CD4-positive, alpha-beta T cell (primary cell): ENCODE measurements at regions of chr6 and their contacts with region 1.

Region 1: DNA sequence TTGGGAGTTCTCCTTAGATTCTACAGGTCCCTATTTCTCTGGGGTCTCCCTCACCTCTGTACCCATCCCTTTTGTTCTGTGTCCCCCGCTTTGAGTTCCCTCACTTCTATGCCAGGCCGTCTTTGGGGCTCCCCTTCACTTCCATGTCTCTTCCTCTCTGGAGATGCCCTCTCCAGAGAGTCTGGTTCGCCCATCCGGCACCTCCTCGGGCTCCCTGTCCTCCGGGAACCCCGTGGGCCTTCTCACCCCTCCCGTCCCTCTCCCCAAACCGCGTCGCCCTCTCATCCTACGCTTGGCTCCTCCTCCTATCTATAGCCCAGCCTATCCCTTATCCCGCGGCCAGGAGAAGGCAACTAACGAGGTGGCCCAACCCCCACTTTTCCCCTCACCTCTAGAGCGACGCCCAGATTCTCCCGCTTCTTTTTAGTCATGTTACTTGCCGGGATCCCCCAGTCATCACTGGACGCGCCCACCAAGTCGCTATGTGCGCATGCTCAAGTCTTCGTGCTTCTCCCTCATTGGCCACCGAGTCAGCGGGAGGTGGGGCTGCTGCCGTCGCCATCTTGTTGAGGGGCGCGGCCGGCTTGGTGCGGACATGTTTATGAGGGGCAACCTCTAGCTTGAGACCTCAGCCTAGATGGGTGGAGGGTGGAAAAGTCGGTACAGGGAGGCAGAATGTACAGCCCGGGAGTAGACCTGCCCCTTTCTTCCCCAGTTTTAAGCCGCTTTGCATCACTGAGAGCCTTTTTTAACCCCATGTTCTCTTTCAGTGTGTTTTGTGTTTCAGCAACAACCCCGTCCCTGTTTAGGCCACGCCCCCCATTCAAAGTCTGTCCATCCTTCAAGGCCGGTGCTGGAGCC is at the start of gene CCDC167:
- DNase-seq: peak; percentile 90 to 98 (median 94)
- ATAC-seq: peak; percentile 66
- H3K4me3 ChIP-seq: peak within 1 kb of the TSS; percentile 86
- H3K4me3 Mint-ChIP-seq: peak within 1 kb of the TSS; percentile 93
- H3K27ac ChIP-seq: peak within 1 kb of the TSS; percentile 77 to 81
- H3K27ac Mint-ChIP-seq: peak within 1 kb of the TSS; percentile 97
- H3K4me1 ChIP-seq: peaks cover 87% of the 10 kb centered on the region
- H3K4me1 Mint-ChIP-seq: peaks cover 79% of the 10 kb centered on the region
- H3K27me3 ChIP-seq: no peaks in the 10 kb centered on the region
- H3K27me3 Mint-ChIP-seq: no peaks in the 10 kb centered on the region
- CTCF ChIP-seq: no peak
- total RNA-seq, gene CCDC167: 7.3 to 8.0 TPM

Region 2: DNA sequence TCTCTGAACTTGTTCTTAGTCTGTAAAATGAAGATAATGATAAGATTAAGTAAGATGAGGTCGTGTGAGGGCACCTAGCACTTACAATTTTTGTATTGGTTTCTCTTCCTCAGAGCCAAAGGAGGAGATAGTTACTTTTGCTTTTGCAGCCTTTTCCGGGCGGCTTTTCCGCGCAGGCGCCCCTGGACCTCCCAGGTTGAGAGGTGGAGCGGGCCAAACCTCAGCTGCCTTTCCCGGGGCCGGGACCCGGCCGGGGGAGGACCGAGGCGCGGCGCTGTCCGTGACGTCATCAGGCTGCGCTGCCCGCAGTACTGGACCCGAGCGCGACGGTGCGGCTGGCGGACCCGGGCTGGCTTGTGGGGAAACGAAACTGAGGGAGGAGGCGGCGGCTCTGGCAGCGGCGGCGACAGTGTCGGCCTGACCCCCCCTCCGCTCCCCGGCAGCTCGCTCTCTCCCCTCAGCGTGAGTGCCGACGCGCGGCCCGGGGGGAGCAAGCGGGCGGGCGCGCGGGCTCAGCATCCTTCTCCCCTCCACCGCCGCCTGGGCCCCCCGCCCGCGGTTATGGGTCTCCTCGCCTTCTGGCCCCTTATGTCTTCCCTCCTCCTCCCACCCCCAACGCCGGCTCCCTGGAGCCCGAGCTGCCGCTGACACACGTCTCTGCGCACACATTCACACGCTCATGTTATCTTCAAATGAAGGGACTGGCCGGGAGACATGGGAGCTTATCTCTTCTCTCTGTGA is 66.6 kb before region 1 on chr6 and contains the start of gene CMTR1:
- CTCF ChIA-PET with region 1: no interaction called
- POLR2A ChIA-PET with region 1: interaction called, 15 read pairs
- intact Hi-C with region 1: loop called in 1 of 2 experiments (anchors 5 kb)
- DNase-seq: peak; percentile 91 to 99 (median 96)
- ATAC-seq: peak; percentile 89
- H3K4me3 ChIP-seq: peak within 1 kb of the TSS; percentile 98
- H3K4me3 Mint-ChIP-seq: peak within 1 kb of the TSS; percentile 95
- H3K27ac ChIP-seq: peak within 1 kb of the TSS; percentile 91
- H3K27ac Mint-ChIP-seq: peak within 1 kb of the TSS; percentile 95
- H3K4me1 ChIP-seq: peaks cover 29% of the 10 kb centered on the region
- H3K4me1 Mint-ChIP-seq: peaks cover 45% of the 10 kb centered on the region
- H3K27me3 ChIP-seq: no peaks in the 10 kb centered on the region
- H3K27me3 Mint-ChIP-seq: peaks cover 6% of the 10 kb centered on the region
- CTCF ChIP-seq: no peak
- total RNA-seq, gene CMTR1: 79.7 to 80.3 TPM

Region 3: DNA sequence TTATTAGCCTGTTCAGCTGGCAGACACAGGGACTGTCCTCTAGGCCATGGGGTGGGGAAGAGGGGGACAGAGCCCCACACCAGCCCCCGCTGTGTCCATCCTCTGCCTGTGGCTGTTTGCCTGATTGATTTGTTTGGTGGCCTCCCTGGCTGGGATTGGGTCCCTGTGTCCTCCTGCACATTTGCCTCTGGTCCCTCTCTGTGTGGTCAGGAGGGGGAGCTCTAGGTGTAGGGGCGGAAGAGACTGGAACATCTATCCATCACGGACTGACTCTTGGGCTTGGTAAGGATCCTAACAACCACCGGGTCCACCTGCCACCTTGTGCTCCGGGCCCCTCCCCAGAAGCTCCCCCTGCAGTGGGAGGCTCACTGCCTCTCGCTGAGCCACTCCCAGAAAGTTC is 38.4 kb after region 1 on chr6:
- CTCF ChIA-PET with region 1: no interaction called
- POLR2A ChIA-PET with region 1: interaction called, 4 read pairs
- intact Hi-C with region 1: loop called in 1 of 2 experiments (anchors 5 kb)
- DNase-seq: no peak
- ATAC-seq: no peak
- H3K4me3 ChIP-seq: no peak overlapping the region
- H3K4me3 Mint-ChIP-seq: no peak overlapping the region
- H3K27ac ChIP-seq: no peak overlapping the region
- H3K27ac Mint-ChIP-seq: peak overlapping the region; percentile 63
- H3K4me1 ChIP-seq: peaks cover 23% of the 10 kb centered on the region
- H3K4me1 Mint-ChIP-seq: peaks cover 35% of the 10 kb centered on the region
- H3K27me3 ChIP-seq: no peaks in the 10 kb centered on the region
- H3K27me3 Mint-ChIP-seq: no peaks in the 10 kb centered on the region
- CTCF ChIP-seq: no peak

Region 4: DNA sequence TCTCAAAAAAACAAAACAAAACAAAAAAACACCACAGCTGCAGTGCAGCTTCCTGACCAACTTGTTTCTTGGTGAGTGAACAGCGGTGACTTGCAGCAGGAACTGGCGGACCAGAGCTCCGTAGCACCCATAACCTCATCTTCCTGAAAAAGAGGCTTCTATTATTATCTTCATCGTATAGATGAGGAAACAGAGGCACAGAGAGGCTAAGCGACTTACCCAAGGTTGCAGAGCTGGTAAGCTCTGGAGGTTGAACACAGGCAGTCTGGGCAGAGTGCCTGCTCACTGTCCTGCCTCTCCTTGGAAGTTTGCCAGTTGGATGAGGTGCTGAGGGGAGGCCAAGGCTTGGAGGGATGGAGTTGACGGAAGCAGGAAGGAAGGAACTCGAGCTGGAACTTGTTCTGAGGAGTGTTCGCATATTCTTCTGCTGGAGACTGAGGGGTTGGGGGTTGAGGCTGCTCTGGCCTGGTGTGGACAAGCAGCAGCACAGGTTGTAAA is 48.0 kb after region 1 on chr6:
- CTCF ChIA-PET with region 1: no interaction called
- POLR2A ChIA-PET with region 1: interaction called, 19 read pairs
- intact Hi-C with region 1: no loop called
- DNase-seq: peak in 5 of 14 experiments; percentile 9 to 59 (median 47)
- ATAC-seq: peak; percentile 63
- H3K4me3 ChIP-seq: no peak overlapping the region
- H3K4me3 Mint-ChIP-seq: peak overlapping the region; percentile 3
- H3K27ac ChIP-seq: peak overlapping the region in 1 of 2 donors; percentile 65
- H3K27ac Mint-ChIP-seq: peak overlapping the region; percentile 81
- H3K4me1 ChIP-seq: peaks cover 37% of the 10 kb centered on the region
- H3K4me1 Mint-ChIP-seq: peaks cover 54% of the 10 kb centered on the region
- H3K27me3 ChIP-seq: no peaks in the 10 kb centered on the region
- H3K27me3 Mint-ChIP-seq: no peaks in the 10 kb centered on the region
- CTCF ChIP-seq: no peak

Region 5: DNA sequence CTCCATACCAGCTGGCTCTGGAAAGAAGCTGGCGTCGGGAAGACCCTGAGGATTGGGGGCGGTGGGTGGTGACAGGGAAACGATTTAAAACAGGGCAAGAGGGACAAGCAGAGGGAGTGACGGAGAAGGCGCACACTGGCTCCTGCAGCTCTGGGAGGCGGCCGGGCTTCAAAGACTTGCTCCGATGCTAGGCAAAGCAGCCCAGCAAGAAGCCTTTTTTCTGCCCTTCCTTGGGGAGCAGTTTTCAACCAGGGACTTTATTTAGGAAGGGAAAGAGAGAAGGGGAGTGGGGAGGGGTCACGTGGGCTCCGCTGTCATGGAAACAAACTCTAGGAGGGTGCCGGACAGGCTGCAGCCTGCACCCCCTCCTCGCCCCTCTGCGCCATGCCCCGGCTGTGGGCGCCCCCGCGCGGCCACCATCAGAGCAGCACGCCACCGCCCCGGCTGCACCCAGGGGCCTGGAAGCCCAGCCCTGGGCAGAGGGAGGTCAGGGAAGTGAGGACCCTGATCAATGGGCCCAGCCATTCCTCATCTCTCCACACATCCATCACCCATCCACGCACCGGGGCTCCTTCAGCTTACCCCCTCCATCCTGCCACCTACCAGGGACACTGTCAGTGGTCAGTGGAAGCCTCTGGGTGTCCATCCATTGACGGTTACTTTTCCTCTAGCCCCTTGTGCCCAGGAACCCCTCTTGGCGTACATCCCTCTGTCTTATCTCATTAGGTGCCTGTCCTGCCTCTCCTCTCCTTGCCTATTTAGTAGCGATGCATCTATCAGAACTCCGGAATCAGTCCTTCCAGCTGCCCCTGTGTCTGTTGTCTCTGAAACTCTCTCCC is 66.7 kb after region 1 on chr6:
- CTCF ChIA-PET with region 1: interaction called, 7 read pairs
- POLR2A ChIA-PET with region 1: interaction called, 3 read pairs
- intact Hi-C with region 1: loop called in 1 of 2 experiments (anchors 5 kb)
- DNase-seq: peak; percentile 41 to 86 (median 70)
- ATAC-seq: peak; percentile 91
- H3K4me3 ChIP-seq: peak overlapping the region; percentile 56
- H3K4me3 Mint-ChIP-seq: peak overlapping the region; percentile 49
- H3K27ac ChIP-seq: no peak overlapping the region
- H3K27ac Mint-ChIP-seq: no peak overlapping the region
- H3K4me1 ChIP-seq: peaks cover 13% of the 10 kb centered on the region
- H3K4me1 Mint-ChIP-seq: peaks cover 12% of the 10 kb centered on the region
- H3K27me3 ChIP-seq: peaks cover 0 to 4% of the 10 kb centered on the region in 2 experiments
- H3K27me3 Mint-ChIP-seq: no peaks in the 10 kb centered on the region
- CTCF ChIP-seq: peak; percentile 93